Activated CD4-positive, alpha-beta T cell treated with anti-CD3 and anti-CD28 coated beads for 36 hours (primary cell): ENCODE measurements at regions of chr6 and their contacts with region 1.

Region 1: GRCh38 chr6:125764121-125764671 is 14.8 kb downstream of the HEY2 start:
- DNase-seq: no peak
- ATAC-seq: no peak
- H3K4me3 Mint-ChIP-seq: no peak overlapping the region
- H3K27ac Mint-ChIP-seq: no peak overlapping the region
- H3K4me1 Mint-ChIP-seq: no peaks in the 10 kb centered on the region
- H3K27me3 Mint-ChIP-seq: peaks cover 31% of the 10 kb centered on the region

Region 2: GRCh38 chr6:125301435-125302391 is 462.5 kb before region 1 on chr6 and contains the start of gene HDDC2:
- CTCF ChIA-PET with region 1: no interaction called
- POLR2A ChIA-PET with region 1: no interaction called
- intact Hi-C with region 1: no loop called
- DNase-seq: peak; percentile 64
- ATAC-seq: peak; percentile 79
- H3K4me3 Mint-ChIP-seq: peak within 1 kb of the TSS; percentile 94
- H3K27ac Mint-ChIP-seq: peak within 1 kb of the TSS; percentile 98
- H3K4me1 Mint-ChIP-seq: peaks cover 46% of the 10 kb centered on the region
- H3K27me3 Mint-ChIP-seq: no peaks in the 10 kb centered on the region
- total RNA-seq, gene HDDC2: 96.7 to 120 TPM

Region 3: GRCh38 chr6:125314019-125314581 is 450.1 kb before region 1 on chr6:
- CTCF ChIA-PET with region 1: interaction called, 10 read pairs
- POLR2A ChIA-PET with region 1: no interaction called
- intact Hi-C with region 1: loop called (anchors 1 kb)
- DNase-seq: peak; percentile 62
- ATAC-seq: peak; percentile 74
- H3K4me3 Mint-ChIP-seq: no peak overlapping the region
- H3K27ac Mint-ChIP-seq: no peak overlapping the region
- H3K4me1 Mint-ChIP-seq: no peaks in the 10 kb centered on the region
- H3K27me3 Mint-ChIP-seq: peaks cover 2% of the 10 kb centered on the region

Region 4: GRCh38 chr6:125512621-125513020 is 251.6 kb before region 1 on chr6:
- CTCF ChIA-PET with region 1: no interaction called
- POLR2A ChIA-PET with region 1: no interaction called
- intact Hi-C with region 1: loop called (anchors 5 to 10 kb)
- DNase-seq: no peak
- ATAC-seq: no peak
- H3K4me3 Mint-ChIP-seq: no peak overlapping the region
- H3K27ac Mint-ChIP-seq: no peak overlapping the region
- H3K4me1 Mint-ChIP-seq: no peaks in the 10 kb centered on the region
- H3K27me3 Mint-ChIP-seq: peaks cover 4% of the 10 kb centered on the region